Right ventricle myocardium inferior (tissue), 1 donor: ENCODE measurements at regions of chr13 and their contacts with region 1.

Region 1: DNA sequence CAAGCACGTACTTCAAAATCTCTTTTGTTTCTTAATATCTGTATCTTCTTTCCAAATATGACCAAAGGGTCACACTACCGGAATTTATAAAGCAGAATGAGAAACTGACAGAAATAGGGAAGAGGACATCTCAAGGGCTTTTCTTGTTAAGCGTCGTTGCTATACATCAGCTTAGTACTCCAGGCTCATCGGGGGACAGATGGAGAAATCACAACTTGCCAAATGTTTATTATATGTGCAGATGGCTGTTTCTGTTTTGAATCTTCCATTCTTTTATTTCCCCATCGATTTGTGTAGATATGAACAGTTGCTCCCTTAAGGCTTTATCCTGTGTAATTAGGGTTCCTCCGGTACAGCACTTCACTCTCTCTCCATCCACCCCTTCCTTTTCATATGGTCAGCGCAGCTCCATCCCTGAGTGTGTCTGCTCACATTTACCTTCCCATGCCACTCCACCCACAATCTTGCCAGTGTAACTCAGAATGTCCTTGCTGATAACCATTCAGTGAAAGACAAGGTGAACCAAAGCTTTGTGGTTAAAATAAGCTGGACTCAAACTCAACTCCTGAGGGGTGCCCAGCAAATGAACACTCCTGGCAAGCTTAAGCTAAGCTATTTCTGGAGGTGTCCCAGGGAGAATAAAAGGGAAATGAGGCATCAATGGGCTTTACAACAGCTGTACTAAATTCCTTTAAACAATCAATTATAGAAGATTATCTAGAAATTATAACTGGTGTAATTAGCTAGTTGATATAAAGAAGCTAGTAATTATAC is 51.3 kb downstream of the TBC1D4 start:
- DNase-seq: no peak
- ATAC-seq: peak; percentile 58

Region 2: GRCh38 chr13:75416327-75417005 is 14.2 kb before region 1 on chr13:
- intact Hi-C with region 1: loop called (anchors 2 kb)
- DNase-seq: no peak
- ATAC-seq: no peak